Activated CD8-positive, alpha-beta T cell treated with anti-CD3 and anti-CD28 coated beads, Interleukin-2, amount 10 ng/mL, durations not matched to agents 7 days and 5 days (primary cell): ENCODE measurements at regions of chr3 and their contacts with region 1.

Region 1: GRCh38 chr3:52339612-52340011 is 23.5 kb downstream of the DNAH1 start:
- DNase-seq: peak; percentile 70
- ATAC-seq: peak; percentile 71
- H3K4me3 Mint-ChIP-seq: no peak overlapping the region
- H3K27ac Mint-ChIP-seq: no peak overlapping the region
- H3K4me1 Mint-ChIP-seq: peaks cover 5% of the 10 kb centered on the region
- H3K27me3 Mint-ChIP-seq: no peaks in the 10 kb centered on the region

Region 2: GRCh38 chr3:52220380-52221026 is 119.1 kb before region 1 on chr3:
- CTCF ChIA-PET with region 1: interaction called, 157 read pairs
- POLR2A ChIA-PET with region 1: interaction called, 6 read pairs
- DNase-seq: peak; percentile 93
- ATAC-seq: peak; percentile 66
- H3K4me3 Mint-ChIP-seq: peak overlapping the region; percentile 81
- H3K27ac Mint-ChIP-seq: peak overlapping the region; percentile 81
- H3K4me1 Mint-ChIP-seq: peaks cover 96% of the 10 kb centered on the region
- H3K27me3 Mint-ChIP-seq: no peaks in the 10 kb centered on the region

Region 3: GRCh38 chr3:52245322-52246263 is 94.0 kb before region 1 on chr3 and contains the start of gene PPM1M:
- CTCF ChIA-PET with region 1: interaction called, 38 read pairs
- POLR2A ChIA-PET with region 1: interaction called, 3 read pairs
- DNase-seq: peak; percentile 68
- ATAC-seq: peak; percentile 63
- H3K4me3 Mint-ChIP-seq: peak within 1 kb of the TSS; percentile 92
- H3K27ac Mint-ChIP-seq: peak within 1 kb of the TSS; percentile 87
- H3K4me1 Mint-ChIP-seq: peaks cover 83% of the 10 kb centered on the region
- H3K27me3 Mint-ChIP-seq: no peaks in the 10 kb centered on the region
- total RNA-seq, gene PPM1M: 90.7 to 91.9 TPM

Region 4: DNA sequence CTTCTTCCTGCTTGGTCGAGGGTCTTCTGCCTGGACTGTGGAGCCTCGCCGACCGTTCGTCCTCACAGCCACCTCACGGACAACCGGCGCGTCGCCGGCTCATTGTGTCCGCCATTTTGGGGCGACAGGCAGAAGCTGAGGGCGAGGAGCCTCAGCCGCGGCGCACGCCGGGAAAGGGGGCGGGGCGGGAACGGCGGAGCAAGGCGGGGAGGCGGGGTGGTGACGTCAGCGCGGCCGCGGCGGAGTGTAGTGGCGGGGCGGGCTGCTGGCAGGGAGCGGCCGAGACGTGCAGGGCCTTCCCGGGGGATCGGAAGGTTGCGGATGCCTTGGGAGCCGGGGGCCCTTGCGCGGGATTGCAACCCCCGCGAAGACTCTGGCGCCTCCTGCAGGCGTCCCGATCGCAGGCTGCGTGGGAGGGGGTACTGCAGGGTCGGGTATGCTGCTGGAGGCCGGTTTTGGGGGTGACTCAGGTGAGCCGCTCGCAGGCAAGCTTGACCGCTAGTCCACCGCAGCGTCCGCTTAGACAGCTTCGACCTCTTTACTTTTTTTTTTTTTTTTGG is 61.0 kb before region 1 on chr3 and contains the start of gene WDR82:
- CTCF ChIA-PET with region 1: interaction called, 34 read pairs
- POLR2A ChIA-PET with region 1: no interaction called
- DNase-seq: peak; percentile 98
- ATAC-seq: peak; percentile 79
- H3K4me3 Mint-ChIP-seq: peak within 1 kb of the TSS; percentile 100
- H3K27ac Mint-ChIP-seq: peak within 1 kb of the TSS; percentile 99
- H3K4me1 Mint-ChIP-seq: peaks cover 56% of the 10 kb centered on the region
- H3K27me3 Mint-ChIP-seq: no peaks in the 10 kb centered on the region
- total RNA-seq, gene WDR82: 131 TPM

Region 5: DNA sequence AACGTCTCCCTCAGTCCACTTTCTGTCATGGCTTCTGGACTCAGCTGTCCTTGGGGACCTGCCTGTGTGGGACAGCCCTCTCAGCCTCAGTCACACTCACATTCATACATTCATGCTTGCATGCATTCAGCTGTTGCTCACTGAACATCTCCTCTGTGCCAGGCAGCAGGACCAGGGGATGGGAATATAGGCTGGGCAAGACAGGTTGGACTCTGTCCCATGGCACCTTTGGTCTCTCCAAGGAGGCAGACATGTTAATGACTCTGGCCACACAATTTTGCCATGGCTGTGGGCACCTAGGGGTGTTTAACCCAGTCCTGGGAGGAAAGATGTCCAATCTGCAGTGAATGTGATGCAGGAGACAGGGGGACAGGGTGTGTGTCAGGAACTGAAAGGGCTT is 31.3 kb before region 1 on chr3:
- CTCF ChIA-PET with region 1: interaction called, 12 read pairs
- POLR2A ChIA-PET with region 1: no interaction called
- DNase-seq: no peak
- ATAC-seq: no peak
- H3K4me3 Mint-ChIP-seq: no peak overlapping the region
- H3K27ac Mint-ChIP-seq: no peak overlapping the region
- H3K4me1 Mint-ChIP-seq: peaks cover 30% of the 10 kb centered on the region
- H3K27me3 Mint-ChIP-seq: no peaks in the 10 kb centered on the region

Region 6: GRCh38 chr3:52444860-52445793 is 105.5 kb after region 1 on chr3 and contains the start of gene SEMA3G:
- CTCF ChIA-PET with region 1: interaction called, 10 read pairs
- POLR2A ChIA-PET with region 1: no interaction called
- DNase-seq: peak; percentile 90
- ATAC-seq: peak; percentile 98
- H3K4me3 Mint-ChIP-seq: no peak within 1 kb of the TSS
- H3K27ac Mint-ChIP-seq: peak within 1 kb of the TSS; percentile 30
- H3K4me1 Mint-ChIP-seq: peaks cover 19% of the 10 kb centered on the region
- H3K27me3 Mint-ChIP-seq: no peaks in the 10 kb centered on the region
- total RNA-seq, gene SEMA3G: 0.13 to 0.21 TPM

Region 7: DNA sequence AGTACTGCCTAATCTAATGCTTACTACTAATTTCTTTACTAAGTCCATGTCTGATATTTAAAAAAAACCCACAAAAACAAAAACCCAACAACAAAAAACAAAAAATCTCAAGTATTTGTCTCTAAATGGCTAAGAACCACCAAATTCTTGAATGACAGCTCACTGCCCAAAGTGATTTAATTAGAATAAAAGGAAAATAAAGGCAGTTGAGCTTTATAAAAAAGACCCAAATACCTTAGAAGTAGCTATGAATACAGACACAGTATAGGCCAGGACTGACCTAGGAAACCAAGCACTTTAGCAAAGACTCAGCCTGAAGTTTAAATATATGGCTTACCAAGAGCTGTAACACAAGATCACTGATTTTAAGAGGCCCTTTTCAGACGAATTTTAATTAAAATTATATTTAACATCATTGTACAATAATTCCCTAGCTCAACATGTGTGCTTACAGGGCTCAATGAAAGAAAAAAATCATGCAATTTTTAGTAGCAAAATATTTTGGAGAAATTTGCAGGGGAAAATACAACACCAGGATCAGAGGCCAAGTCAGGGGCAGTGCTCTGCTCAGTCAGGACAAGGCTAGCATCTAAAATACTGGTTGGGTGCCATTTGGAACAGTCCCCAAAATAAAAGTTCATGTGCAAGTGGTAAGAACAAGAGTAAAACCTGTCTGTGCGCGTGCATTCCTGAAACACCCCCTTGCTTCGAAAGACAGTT is 221.6 kb after region 1 on chr3:
- CTCF ChIA-PET with region 1: no interaction called
- POLR2A ChIA-PET with region 1: no interaction called
- DNase-seq: no peak
- ATAC-seq: no peak
- H3K4me3 Mint-ChIP-seq: no peak overlapping the region
- H3K27ac Mint-ChIP-seq: no peak overlapping the region
- H3K4me1 Mint-ChIP-seq: no peaks in the 10 kb centered on the region
- H3K27me3 Mint-ChIP-seq: no peaks in the 10 kb centered on the region